ENCODE measurements at regions of chr19 and their contacts with region 1.

Region 1: GRCh38 chr19:18521885-18522624 is at the start of gene ELL:
- DNase-seq: peak; percentile 100
- ATAC-seq: peak; percentile 92
- H3K4me3 Mint-ChIP-seq: peak within 1 kb of the TSS; percentile 80
- H3K27ac Mint-ChIP-seq: peak within 1 kb of the TSS; percentile 93
- H3K4me1 Mint-ChIP-seq: peaks cover 14% of the 10 kb centered on the region
- H3K27me3 Mint-ChIP-seq: no peaks in the 10 kb centered on the region
- total RNA-seq, gene ELL: 20.2 to 21.4 TPM

Region 2: GRCh38 chr19:18203863-18204393 is 318.1 kb before region 1 on chr19 and contains the start of gene RAB3A:
- CTCF ChIA-PET with region 1: no interaction called
- POLR2A ChIA-PET with region 1: no interaction called
- intact Hi-C with region 1: loop called in 1 of 2 experiments (anchors 1 kb)
- DNase-seq: peak; percentile 100
- ATAC-seq: peak; percentile 94
- H3K4me3 Mint-ChIP-seq: peak within 1 kb of the TSS; percentile 96
- H3K27ac Mint-ChIP-seq: peak within 1 kb of the TSS; percentile 90
- H3K4me1 Mint-ChIP-seq: peaks cover 18% of the 10 kb centered on the region
- H3K27me3 Mint-ChIP-seq: no peaks in the 10 kb centered on the region
- total RNA-seq, gene RAB3A: 5.6 to 8.9 TPM

Region 3: GRCh38 chr19:18496167-18496979 is 25.7 kb before region 1 on chr19:
- CTCF ChIA-PET with region 1: interaction called, 10 read pairs
- POLR2A ChIA-PET with region 1: interaction called, 8 read pairs
- intact Hi-C with region 1: loop called in 1 of 2 experiments (anchors 2 kb)
- DNase-seq: peak; percentile 79
- ATAC-seq: peak; percentile 96
- H3K4me3 Mint-ChIP-seq: peak overlapping the region; percentile 45
- H3K27ac Mint-ChIP-seq: peak overlapping the region; percentile 88
- H3K4me1 Mint-ChIP-seq: peaks cover 77% of the 10 kb centered on the region
- H3K27me3 Mint-ChIP-seq: no peaks in the 10 kb centered on the region

Region 4: DNA sequence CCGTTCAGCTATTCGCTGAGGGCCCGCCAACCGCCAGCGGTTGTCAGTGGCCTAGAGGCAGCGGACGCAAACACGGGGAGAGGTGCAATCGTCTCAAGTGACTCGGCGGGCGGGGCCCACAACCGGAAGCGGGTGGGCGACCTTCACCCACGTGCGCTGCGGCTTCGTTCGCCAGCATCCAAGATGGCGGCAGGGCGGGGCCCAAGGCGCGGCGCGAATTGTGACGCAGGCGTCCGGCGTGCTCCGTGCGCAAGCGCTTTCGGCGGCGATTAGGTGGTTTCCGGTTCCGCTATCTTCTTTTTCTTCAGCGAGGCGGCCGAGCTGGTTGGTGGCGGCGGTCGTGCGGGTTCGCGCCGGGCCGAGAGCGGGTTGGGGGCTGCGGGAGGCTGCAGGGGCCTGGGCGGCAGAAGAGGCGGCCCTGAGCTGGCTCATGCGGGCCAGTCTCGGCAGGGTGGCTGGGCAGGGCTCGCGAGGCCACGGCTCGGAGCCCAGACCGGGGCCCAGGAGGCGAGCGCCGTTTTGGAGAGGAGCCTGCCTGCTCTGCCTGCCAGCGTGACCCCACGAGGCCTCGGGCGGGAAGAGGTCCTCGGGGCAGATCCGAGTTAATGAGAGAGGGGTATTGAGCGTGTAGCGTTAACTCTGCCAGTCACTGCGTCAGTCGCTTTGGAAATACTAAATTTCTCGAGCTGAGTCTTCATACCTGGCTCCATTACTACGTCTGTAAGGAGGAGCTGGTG is 49.7 kb after region 1 on chr19 and contains the start of gene UBA52:
- CTCF ChIA-PET with region 1: interaction called, 15 read pairs
- POLR2A ChIA-PET with region 1: interaction called, 4 read pairs
- intact Hi-C with region 1: loop called (anchors 1 kb)
- DNase-seq: peak; percentile 100
- ATAC-seq: peak; percentile 94
- H3K4me3 Mint-ChIP-seq: peak within 1 kb of the TSS; percentile 89
- H3K27ac Mint-ChIP-seq: peak within 1 kb of the TSS; percentile 95
- H3K4me1 Mint-ChIP-seq: peaks cover 27% of the 10 kb centered on the region
- H3K27me3 Mint-ChIP-seq: no peaks in the 10 kb centered on the region
- total RNA-seq, gene UBA52: 1,703 to 2,296 TPM

Region 5: DNA sequence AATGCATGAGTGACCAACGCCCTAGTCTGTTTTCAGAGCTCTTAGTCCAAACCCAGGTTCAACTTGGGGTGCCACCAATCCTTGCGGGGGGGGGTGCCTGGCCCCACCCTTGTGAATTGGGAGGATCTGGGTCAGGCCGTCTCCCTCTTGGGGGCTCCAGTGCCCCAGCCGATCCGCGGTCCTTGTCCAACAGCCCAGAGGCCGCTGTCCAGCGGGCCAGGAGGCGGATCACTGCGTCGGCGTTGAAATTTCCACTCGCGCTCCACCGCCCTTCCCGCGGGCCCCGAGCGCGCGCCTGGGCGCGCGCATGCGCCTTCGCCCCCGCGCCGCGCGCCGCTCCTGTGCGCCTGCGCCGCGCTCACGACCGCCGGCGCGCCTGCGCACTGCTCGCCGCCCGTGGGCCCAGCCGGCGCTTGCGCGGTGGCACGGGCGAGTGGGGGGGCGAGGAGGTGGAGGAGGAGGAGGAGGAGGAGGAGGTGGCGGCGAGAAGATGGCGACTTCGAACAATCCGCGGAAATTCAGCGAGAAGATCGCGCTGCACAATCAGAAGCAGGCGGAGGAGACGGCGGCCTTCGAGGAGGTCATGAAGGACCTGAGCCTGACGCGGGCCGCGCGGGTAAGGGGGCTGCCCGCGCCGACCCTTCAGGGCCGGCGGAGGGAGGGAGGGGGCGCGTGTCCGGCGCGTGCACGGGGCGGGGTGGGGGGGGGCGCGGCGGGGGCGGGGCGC is 161.3 kb after region 1 on chr19 and contains the start of gene CRTC1:
- CTCF ChIA-PET with region 1: no interaction called
- POLR2A ChIA-PET with region 1: no interaction called
- intact Hi-C with region 1: loop called in 1 of 2 experiments (anchors 1 kb)
- DNase-seq: peak; percentile 95
- ATAC-seq: peak; percentile 91
- H3K4me3 Mint-ChIP-seq: peak within 1 kb of the TSS; percentile 83
- H3K27ac Mint-ChIP-seq: peak within 1 kb of the TSS; percentile 89
- H3K4me1 Mint-ChIP-seq: peaks cover 16% of the 10 kb centered on the region
- H3K27me3 Mint-ChIP-seq: no peaks in the 10 kb centered on the region
- total RNA-seq, gene CRTC1: 5.3 to 9.7 TPM

Region 6: GRCh38 chr19:18932216-18932841 is 410.3 kb after region 1 on chr19:
- CTCF ChIA-PET with region 1: no interaction called
- POLR2A ChIA-PET with region 1: no interaction called
- intact Hi-C with region 1: loop called in 1 of 2 experiments (anchors 1 kb)
- DNase-seq: peak; percentile 95
- ATAC-seq: peak; percentile 98
- H3K4me3 Mint-ChIP-seq: peak overlapping the region; percentile 53
- H3K27ac Mint-ChIP-seq: no peak overlapping the region
- H3K4me1 Mint-ChIP-seq: peaks cover 6% of the 10 kb centered on the region
- H3K27me3 Mint-ChIP-seq: peaks cover 1% of the 10 kb centered on the region

Region 7: DNA sequence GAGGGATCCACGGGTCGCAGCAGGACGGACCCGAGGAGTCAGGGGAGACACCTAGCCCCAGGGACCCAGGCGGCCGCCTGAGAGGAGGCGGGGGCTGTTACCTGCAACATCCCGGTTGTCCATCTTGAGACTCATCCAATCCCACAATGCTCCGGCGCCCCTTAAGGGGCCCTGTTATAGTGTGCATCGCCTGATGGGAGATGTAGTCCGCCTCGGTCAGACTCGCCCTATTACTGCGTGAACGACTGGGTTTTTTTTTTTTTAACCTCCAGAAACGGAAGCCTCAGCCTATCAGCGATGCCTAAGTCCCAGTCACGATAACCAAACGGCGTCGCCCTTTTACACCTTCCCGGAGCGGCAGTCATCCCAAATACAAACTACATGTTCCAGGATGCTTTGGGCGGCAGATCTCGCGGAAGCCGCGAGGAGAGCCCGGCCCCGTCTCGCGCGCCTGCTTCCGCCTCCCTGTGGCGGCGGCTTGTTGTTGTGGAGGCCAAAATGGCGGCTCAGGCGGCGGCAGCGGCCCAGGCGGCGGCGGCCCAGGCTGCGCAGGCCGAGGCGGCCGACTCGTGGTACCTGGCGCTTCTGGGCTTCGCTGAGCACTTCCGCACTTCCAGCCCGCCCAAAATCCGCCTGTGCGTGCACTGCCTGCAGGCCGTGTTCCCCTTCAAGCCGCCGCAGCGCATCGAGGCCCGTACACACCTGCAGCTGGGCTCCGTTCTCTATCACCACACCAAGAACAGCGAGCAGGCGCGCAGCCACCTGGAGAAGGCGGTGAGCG is 798.5 kb after region 1 on chr19 and contains the starts of genes MAU2 and SUGP1:
- CTCF ChIA-PET with region 1: no interaction called
- POLR2A ChIA-PET with region 1: no interaction called
- intact Hi-C with region 1: loop called in 1 of 2 experiments (anchors 1 kb)
- DNase-seq: peak; percentile 96
- ATAC-seq: peak; percentile 93
- H3K4me3 Mint-ChIP-seq: peak within 1 kb of the TSS; percentile 93
- H3K27ac Mint-ChIP-seq: peak within 1 kb of the TSS; percentile 100
- H3K4me1 Mint-ChIP-seq: peaks cover 39% of the 10 kb centered on the region
- H3K27me3 Mint-ChIP-seq: no peaks in the 10 kb centered on the region
- total RNA-seq, gene MAU2: 33.3 to 45.7 TPM
- total RNA-seq, gene SUGP1: 49.4 to 62.0 TPM